ENCODE measurements at regions of chr3 and their contacts with region 1.

Region 1: GRCh38 chr3:21484057-21484827 is 266.8 kb downstream of the ZNF385D start:
- DNase-seq: no peak
- H3K4me3 ChIP-seq: no peak overlapping the region
- H3K27ac ChIP-seq: no peak overlapping the region
- H3K4me1 ChIP-seq: no peaks in the 10 kb centered on the region
- H3K27me3 ChIP-seq: no peaks in the 10 kb centered on the region
- CTCF ChIP-seq: peak; percentile 11 to 65 (median 38)
- EP300 ChIP-seq: no peak
- POLR2A ChIP-seq: no peak

Region 2: GRCh38 chr3:20340324-20340928 is 1143.8 kb before region 1 on chr3:
- intact Hi-C with region 1: loop called (anchors 2 kb)
- DNase-seq: peak; percentile 76
- H3K4me3 ChIP-seq: no peak overlapping the region
- H3K27ac ChIP-seq: no peak overlapping the region
- H3K4me1 ChIP-seq: no peaks in the 10 kb centered on the region
- H3K27me3 ChIP-seq: no peaks in the 10 kb centered on the region
- CTCF ChIP-seq: peak; percentile 55 to 81 (median 73)
- EP300 ChIP-seq: no peak
- POLR2A ChIP-seq: no peak

Region 3: DNA sequence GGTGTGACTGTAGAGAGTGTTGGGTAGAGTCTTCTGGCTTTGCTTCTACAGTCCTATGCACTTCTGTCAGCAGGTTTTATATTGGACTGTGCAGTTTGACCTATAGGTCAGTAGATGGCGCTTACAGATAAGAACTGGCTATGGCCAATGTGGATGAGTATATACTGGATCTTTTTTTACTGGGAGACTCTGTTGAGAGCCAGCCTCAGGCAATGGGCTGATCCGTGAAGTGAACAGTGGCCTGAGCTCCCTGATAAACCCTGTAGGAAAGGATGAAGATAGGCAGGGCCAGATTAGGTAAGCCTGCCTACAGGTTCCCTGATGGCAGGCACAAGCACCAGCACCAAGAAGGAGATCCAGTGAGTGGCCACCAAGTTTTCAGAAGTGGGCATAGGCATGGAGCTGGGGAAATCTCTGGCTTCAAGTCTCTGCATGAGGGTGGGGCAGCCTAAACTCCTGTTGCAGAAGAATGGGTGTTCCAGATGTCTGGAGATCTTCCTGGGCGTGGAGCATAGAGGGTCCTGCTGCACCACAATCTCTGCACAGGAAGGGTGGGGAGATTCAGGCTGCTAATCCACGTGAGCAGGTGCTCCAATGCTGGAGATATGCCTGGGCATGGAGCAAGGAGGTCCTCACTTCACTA is 972.3 kb before region 1 on chr3:
- intact Hi-C with region 1: loop called (anchors 5 kb)
- DNase-seq: no peak
- H3K4me3 ChIP-seq: no peak overlapping the region
- H3K27ac ChIP-seq: no peak overlapping the region
- H3K4me1 ChIP-seq: no peaks in the 10 kb centered on the region
- H3K27me3 ChIP-seq: no peaks in the 10 kb centered on the region
- CTCF ChIP-seq: peak in 3 of 4 experiments; percentile 36 to 54 (median 39)
- EP300 ChIP-seq: no peak
- POLR2A ChIP-seq: no peak

Measured in sigmoid colon (tissue), 7 donors.